Activated CD4-positive, alpha-beta T cell treated with anti-CD3 and anti-CD28 coated beads, Interleukin-2, amount 10 ng/mL, durations not matched to agents 24 days and 14 days (primary cell): ENCODE measurements at regions of chr10 and their contacts with region 1.

Region 1: DNA sequence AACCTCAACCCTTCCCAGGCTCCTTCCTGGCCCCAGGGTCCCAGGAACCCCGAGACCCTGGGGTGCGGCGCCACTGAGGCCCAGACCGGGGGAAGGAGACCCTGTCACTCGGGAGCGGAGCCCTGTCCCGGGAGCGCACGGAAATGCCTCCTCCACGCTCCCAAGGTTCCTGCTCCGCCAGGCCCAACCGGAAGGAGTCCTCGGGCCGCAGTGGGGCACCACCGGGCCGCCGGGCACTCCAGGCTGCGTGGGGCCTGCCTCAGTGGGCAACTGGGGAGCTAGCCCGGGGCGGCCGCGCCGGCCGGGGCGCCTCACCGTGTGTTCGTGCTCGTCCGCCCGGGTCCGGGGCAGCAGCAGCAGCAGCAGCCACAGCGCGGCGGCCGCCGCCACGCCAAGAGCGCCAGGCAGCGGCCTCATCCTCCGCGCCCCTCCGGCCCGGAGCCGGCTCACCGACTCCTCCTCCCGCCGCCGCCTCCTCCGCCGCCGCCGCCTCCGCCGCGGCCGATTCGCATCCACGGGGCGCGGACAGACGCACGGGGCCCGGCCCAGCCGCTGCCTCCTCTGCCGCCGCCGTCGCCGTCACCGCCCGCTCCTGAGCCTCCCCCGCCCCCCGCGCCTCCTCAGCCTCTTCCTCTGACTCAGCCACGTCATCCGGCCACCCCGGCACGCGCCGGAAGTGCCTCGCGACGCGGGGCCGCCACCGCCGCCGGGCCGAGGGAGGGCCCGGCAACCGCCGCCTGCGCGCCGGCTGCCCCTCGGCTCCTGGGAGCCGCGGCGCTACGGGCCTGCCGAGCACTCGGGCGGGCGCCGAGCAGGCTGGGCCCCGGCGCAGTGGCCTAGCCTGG is at the start of gene TM9SF3:
- DNase-seq: peak; percentile 97
- H3K4me3 Mint-ChIP-seq: peak within 1 kb of the TSS; percentile 93
- H3K27ac Mint-ChIP-seq: peak within 1 kb of the TSS; percentile 91
- H3K4me1 Mint-ChIP-seq: peaks cover 25% of the 10 kb centered on the region
- H3K27me3 Mint-ChIP-seq: peaks cover 13% of the 10 kb centered on the region
- total RNA-seq, gene TM9SF3: 84.5 and 86.1 TPM in 2 replicates

Region 2: GRCh38 chr10:96513698-96514561 is 72.7 kb before region 1 on chr10 and contains the start of gene TLL2:
- intact Hi-C with region 1: loop called (anchors 5 kb)
- DNase-seq: peak; percentile 89
- H3K4me3 Mint-ChIP-seq: peak within 1 kb of the TSS; percentile 76
- H3K27ac Mint-ChIP-seq: no peak within 1 kb of the TSS
- H3K4me1 Mint-ChIP-seq: peaks cover 13% of the 10 kb centered on the region
- H3K27me3 Mint-ChIP-seq: peaks cover 62% of the 10 kb centered on the region
- total RNA-seq, gene TLL2: not detected in 2 replicates

Region 3: GRCh38 chr10:96690755-96691731 is 104.4 kb after region 1 on chr10:
- intact Hi-C with region 1: loop called (anchors 2 kb)
- DNase-seq: no peak
- H3K4me3 Mint-ChIP-seq: no peak overlapping the region
- H3K27ac Mint-ChIP-seq: no peak overlapping the region
- H3K4me1 Mint-ChIP-seq: peaks cover 31% of the 10 kb centered on the region
- H3K27me3 Mint-ChIP-seq: no peaks in the 10 kb centered on the region

Region 4: GRCh38 chr10:96838529-96838928 is 251.9 kb after region 1 on chr10:
- intact Hi-C with region 1: no loop called
- DNase-seq: no peak
- H3K4me3 Mint-ChIP-seq: no peak overlapping the region
- H3K27ac Mint-ChIP-seq: no peak overlapping the region
- H3K4me1 Mint-ChIP-seq: peaks cover 41% of the 10 kb centered on the region
- H3K27me3 Mint-ChIP-seq: no peaks in the 10 kb centered on the region

Region 5: DNA sequence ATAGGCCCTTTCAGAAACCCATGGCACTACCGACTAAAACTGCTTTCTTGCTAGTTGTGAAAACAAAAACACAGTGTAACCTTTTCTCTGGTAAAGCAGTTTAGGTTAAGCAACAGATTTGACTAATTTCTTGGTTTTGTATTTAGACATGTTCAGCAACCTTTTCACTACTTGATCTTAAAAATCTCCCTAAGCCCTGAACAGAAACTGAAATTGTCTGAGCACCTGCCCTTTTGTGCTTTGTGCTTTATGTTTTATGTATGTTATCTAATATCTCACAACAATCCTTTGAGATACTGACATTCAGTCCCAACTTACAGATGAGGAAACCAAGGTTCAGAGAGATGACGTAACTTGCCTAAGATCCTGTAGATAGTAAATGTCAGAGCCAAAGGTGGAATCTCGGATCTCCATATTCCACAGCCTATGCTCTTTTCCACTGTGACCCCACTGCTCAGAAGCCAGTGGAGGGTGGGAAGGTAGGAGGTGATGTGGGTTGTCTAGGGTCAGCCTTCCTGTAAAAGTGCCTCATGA is 392.0 kb after region 1 on chr10:
- intact Hi-C with region 1: loop called (anchors 1 kb)
- DNase-seq: no peak
- H3K4me3 Mint-ChIP-seq: peak overlapping the region; percentile 53
- H3K27ac Mint-ChIP-seq: peak overlapping the region; percentile 91
- H3K4me1 Mint-ChIP-seq: peaks cover 23% of the 10 kb centered on the region
- H3K27me3 Mint-ChIP-seq: no peaks in the 10 kb centered on the region

Region 6: GRCh38 chr10:97640174-97640867 is 1053.7 kb after region 1 on chr10 and contains the start of gene PI4K2A:
- intact Hi-C with region 1: loop called (anchors 10 kb)
- DNase-seq: peak; percentile 100
- H3K4me3 Mint-ChIP-seq: peak within 1 kb of the TSS; percentile 95
- H3K27ac Mint-ChIP-seq: peak within 1 kb of the TSS; percentile 90
- H3K4me1 Mint-ChIP-seq: peaks cover 23% of the 10 kb centered on the region
- H3K27me3 Mint-ChIP-seq: peaks cover 3% of the 10 kb centered on the region
- total RNA-seq, gene PI4K2A: 17.8 TPM in 2 replicates